ENCODE measurements at regions of chr4 and their contacts with region 1.

Region 1: GRCh38 chr4:87375719-87376291 is 15.2 kb downstream of the HSD17B11 start:
- DNase-seq: peak; percentile 78
- H3K4me3 Mint-ChIP-seq: no peak overlapping the region
- H3K27ac Mint-ChIP-seq: peak overlapping the region; percentile 23
- H3K4me1 Mint-ChIP-seq: no peaks in the 10 kb centered on the region
- H3K27me3 Mint-ChIP-seq: no peaks in the 10 kb centered on the region
- CTCF ChIP-seq: peak; percentile 42

Region 2: GRCh38 chr4:87353592-87353991 is 22.2 kb before region 1 on chr4:
- CTCF ChIA-PET with region 1: interaction called, 49 read pairs
- POLR2A ChIA-PET with region 1: interaction called, 3 read pairs
- intact Hi-C with region 1: no loop called
- DNase-seq: peak; percentile 71
- H3K4me3 Mint-ChIP-seq: no peak overlapping the region
- H3K27ac Mint-ChIP-seq: peak overlapping the region; percentile 79
- H3K4me1 Mint-ChIP-seq: peaks cover 18% of the 10 kb centered on the region
- H3K27me3 Mint-ChIP-seq: no peaks in the 10 kb centered on the region
- CTCF ChIP-seq: peak; percentile 77

Region 3: DNA sequence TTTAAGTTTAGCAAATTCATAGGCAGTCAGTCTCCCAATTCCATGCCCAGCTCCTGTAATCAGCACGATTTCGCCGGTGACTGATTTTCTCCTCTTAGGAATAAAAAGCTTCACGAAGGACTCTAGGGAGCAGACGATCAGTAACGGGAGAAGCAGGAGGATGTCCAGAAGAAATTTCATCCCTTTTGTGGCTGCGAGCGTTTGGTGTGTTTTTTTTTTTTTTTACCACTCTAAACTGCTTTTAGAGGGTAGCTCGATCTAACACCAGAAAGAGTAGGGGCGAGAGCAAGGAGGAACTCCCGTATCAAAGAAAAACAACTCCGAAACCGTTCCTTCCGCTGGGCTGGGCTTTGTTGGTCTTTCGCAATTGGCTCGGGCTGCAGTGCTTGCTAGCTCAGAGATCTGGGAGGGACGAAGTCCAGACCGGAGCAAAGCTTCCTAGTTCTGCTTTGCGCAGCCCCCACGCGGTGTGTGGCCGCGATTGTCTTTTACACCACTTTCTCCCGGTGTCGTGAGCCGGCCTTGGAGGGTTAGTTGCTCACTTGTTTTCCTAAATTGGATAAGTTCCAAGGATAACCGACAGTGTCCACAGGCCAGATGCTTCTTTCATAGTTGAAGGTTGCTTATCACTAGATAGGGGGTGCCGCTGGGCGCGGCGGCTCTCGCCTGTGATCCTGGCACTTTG is 15.2 kb after region 1 on chr4 and contains the start of gene HSD17B11:
- CTCF ChIA-PET with region 1: interaction called, 43 read pairs
- POLR2A ChIA-PET with region 1: interaction called, 20 read pairs
- intact Hi-C with region 1: no loop called
- DNase-seq: peak; percentile 92
- H3K4me3 Mint-ChIP-seq: peak within 1 kb of the TSS; percentile 93
- H3K27ac Mint-ChIP-seq: peak within 1 kb of the TSS; percentile 88
- H3K4me1 Mint-ChIP-seq: peaks cover 20% of the 10 kb centered on the region
- H3K27me3 Mint-ChIP-seq: no peaks in the 10 kb centered on the region
- CTCF ChIP-seq: no peak
- total RNA-seq, gene HSD17B11: 4.3 and 4.8 TPM in 2 replicates

Region 4: GRCh38 chr4:87465739-87466366 is 90.0 kb after region 1 on chr4:
- CTCF ChIA-PET with region 1: interaction called, 41 read pairs
- POLR2A ChIA-PET with region 1: interaction called, 5 read pairs
- intact Hi-C with region 1: loop called (anchors 1 kb)
- DNase-seq: peak; percentile 50
- H3K4me3 Mint-ChIP-seq: no peak overlapping the region
- H3K27ac Mint-ChIP-seq: no peak overlapping the region
- H3K4me1 Mint-ChIP-seq: no peaks in the 10 kb centered on the region
- H3K27me3 Mint-ChIP-seq: no peaks in the 10 kb centered on the region
- CTCF ChIP-seq: peak; percentile 47